BJ (cell line): ENCODE measurements at regions of chr5 and their contacts with region 1.

Region 1: DNA sequence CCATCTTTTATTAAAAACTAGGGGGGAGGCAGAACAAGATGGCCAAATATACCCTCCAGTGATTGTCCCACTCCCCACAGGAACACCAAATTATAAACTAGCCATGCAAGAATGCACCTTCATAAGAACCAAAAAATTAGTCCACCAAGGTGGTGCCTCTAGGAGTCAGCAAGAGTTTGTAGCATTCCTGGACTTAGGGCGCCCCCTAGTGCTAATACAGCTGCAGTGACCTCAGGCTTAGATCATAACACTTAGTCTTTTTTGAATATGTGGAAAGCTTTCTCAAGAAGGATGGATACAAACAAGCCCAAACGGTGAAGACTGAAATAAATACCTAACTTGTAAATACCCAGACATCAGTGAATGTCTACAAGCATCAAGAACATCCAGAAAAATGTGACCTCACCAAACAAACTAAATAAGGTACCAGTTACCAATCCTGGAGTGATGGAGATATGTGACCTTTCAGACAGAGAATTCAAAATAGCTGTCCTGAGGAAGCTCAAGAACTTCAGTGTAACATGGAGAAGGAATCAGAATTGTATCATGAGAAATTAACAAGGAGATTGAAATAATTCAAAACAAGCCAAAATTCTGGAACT is 19.3 kb downstream of the PPIP5K2 start:
- DNase-seq: no peak
- H3K4me3 ChIP-seq: no peak overlapping the region
- H3K27me3 ChIP-seq: no peaks in the 10 kb centered on the region
- CTCF ChIP-seq: peak; percentile 95

Region 2: GRCh38 chr5:103127292-103127817 is 12.0 kb before region 1 on chr5:
- CTCF ChIA-PET with region 1: interaction called, 20 read pairs
- POLR2A ChIA-PET with region 1: no interaction called
- DNase-seq: no peak
- H3K4me3 ChIP-seq: no peak overlapping the region
- H3K27me3 ChIP-seq: no peaks in the 10 kb centered on the region
- CTCF ChIP-seq: no peak